ENCODE measurements at regions of chr3 and their contacts with region 1.

Region 1: DNA sequence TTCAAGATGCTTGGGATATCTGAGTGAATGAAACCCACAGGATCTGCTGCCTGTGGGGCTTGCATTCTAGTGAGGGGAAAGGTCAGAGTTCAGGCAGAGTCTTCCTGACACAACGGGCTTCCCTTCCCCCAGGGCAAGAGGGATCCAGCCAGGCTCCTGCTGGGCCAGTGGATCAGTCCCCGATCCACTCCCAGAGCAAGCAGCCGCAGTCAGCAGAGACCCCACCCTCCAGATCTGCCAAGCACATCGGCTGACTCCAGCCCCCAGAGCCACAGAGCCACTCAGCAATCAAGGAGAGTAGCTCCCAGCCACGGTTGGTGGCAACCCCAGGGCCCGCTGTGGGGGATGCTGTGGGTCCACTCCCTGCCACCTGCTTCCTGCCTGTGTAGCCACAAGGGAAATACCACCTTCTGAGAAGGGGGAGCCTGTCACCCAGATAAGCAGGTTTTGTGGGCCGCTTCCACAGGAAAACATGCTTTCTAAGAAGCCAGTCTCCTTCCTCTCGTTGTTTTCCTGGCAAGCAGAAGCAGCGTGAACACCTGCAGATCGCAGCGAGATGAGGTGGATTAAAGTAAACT is 44.9 kb downstream of the CPN2 start:
- DNase-seq: peak; percentile 51
- ATAC-seq: peak; percentile 61
- H3K4me3 Mint-ChIP-seq: peak overlapping the region; percentile 70
- H3K27ac Mint-ChIP-seq: peak overlapping the region; percentile 84
- H3K4me1 Mint-ChIP-seq: no peaks in the 10 kb centered on the region
- H3K27me3 Mint-ChIP-seq: no peaks in the 10 kb centered on the region
- CTCF ChIP-seq: no peak

Region 2: DNA sequence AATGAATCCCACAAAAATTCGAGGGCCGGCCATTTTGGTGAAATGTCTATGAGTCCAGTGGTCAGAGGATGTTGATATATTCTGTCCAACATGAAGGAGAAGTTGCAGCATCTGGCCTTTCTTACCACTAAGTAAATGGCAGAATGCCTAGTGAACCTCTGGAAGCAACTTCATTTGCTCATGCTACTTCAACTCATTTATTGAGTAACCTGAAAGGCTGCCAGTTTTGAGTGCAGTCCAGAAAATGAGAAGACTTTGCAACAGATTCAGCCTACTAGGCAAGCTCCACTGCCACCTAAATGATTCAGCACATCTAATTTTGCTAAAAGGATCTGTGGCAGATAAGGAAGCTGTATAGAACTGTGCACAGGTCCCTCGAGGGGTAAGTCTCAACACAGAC is 448.2 kb before region 1 on chr3:
- CTCF ChIA-PET with region 1: no interaction called
- POLR2A ChIA-PET with region 1: no interaction called
- intact Hi-C with region 1: no loop called
- DNase-seq: no peak
- ATAC-seq: no peak
- H3K4me3 Mint-ChIP-seq: no peak overlapping the region
- H3K27ac Mint-ChIP-seq: no peak overlapping the region
- H3K4me1 Mint-ChIP-seq: no peaks in the 10 kb centered on the region
- H3K27me3 Mint-ChIP-seq: no peaks in the 10 kb centered on the region
- CTCF ChIP-seq: no peak

Region 3: GRCh38 chr3:194204042-194204987 is 101.9 kb before region 1 on chr3:
- CTCF ChIA-PET with region 1: no interaction called
- POLR2A ChIA-PET with region 1: interaction called, 3 read pairs
- intact Hi-C with region 1: loop called (anchors 5 kb)
- DNase-seq: peak; percentile 30
- ATAC-seq: peak; percentile 61
- H3K4me3 Mint-ChIP-seq: peak overlapping the region; percentile 80
- H3K27ac Mint-ChIP-seq: peak overlapping the region; percentile 54
- H3K4me1 Mint-ChIP-seq: peaks cover 32% of the 10 kb centered on the region
- H3K27me3 Mint-ChIP-seq: peaks cover 32% of the 10 kb centered on the region
- CTCF ChIP-seq: no peak

Region 4: DNA sequence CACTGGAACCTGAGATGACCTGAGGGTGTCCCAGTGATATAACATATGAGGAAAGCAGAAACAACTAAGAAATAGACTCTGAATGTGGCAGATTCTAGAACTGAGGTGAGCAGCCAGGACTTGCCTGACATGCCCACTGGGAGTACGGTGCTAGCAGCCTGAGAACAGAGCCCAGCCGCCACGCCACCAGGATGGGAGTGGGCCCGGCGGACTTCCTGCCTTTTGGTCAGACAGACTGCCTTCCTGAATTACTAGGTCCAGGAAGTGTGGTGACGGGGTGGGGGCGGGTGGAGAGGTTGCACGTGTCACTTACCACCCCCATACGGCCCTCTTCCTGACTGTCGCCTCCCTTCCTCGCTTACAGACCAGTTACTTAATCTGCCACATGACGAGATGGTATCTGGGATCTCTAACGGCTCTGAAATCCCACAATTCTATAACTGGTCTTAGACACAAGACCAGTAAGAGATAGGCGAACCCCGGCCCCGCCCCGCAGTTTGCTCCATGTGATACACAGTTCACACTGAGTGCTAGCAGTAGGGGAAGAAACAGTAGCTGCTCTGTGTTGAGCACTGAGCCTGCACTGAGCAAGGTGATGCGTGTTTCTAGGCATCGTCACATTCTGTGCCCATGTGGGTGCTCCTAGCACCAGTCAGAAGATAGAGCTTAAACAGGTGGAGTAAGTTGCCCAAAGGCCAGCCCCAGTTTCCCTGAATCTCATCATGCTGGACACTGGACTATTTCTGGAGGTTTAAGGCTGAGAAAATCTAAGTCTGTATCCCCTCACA is 50.8 kb before region 1 on chr3:
- CTCF ChIA-PET with region 1: no interaction called
- POLR2A ChIA-PET with region 1: no interaction called
- intact Hi-C with region 1: loop called (anchors 1 kb)
- DNase-seq: no peak
- ATAC-seq: peak; percentile 77
- H3K4me3 Mint-ChIP-seq: peak overlapping the region; percentile 78
- H3K27ac Mint-ChIP-seq: peak overlapping the region; percentile 50
- H3K4me1 Mint-ChIP-seq: peaks cover 10% of the 10 kb centered on the region
- H3K27me3 Mint-ChIP-seq: peaks cover 17% of the 10 kb centered on the region
- CTCF ChIP-seq: no peak

Measured in activated B cell treated with CpG ODN at 0.5 μM for 24 hours (primary cell).